Caco-2 (cell line): ENCODE measurements at regions of chr5 and their contacts with region 1.

Region 1: DNA sequence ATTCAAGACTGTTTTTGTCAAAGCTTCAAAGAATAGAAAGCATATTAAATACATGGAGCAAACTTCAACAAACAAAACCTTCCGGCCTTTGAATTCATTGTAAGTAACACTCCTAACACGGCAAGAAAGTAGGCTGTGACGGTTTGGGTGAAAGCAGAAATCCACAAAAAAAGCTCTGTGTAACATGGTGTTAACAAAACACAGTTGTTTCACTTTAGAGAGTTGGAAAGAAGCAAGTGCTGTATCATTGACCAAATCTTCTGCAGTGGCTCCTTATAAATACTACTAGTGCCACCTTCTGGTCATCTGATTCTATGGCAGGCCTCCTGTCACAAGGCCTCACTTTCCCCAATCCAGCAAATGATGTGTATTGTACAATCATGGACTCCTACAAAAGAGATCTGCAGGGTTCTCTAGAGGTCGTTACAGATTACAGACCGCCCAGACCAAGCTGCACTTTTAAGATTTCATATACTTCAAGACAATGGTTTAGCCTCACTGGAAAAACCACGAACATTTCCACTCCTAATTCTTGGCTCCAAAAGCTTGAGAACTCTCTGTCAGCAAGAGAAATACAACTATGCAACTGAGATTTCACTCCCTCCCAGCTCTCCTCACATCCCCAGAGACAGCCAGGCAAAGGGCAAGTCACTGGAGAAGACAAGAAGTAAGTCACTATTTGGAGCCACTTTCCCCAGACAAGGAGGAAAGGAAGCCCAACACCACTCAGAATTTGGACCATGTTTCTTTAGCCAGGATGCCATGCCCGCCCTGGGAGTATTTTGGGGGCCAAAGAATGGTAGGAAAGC is 196.2 kb downstream of the DTWD2 start:
- DNase-seq: peak; percentile 44 to 55
- H3K4me3 ChIP-seq: no peak overlapping the region
- H3K4me3 Mint-ChIP-seq: no peak overlapping the region
- H3K27ac Mint-ChIP-seq: no peak overlapping the region
- H3K4me1 ChIP-seq: no peaks in the 10 kb centered on the region
- H3K4me1 Mint-ChIP-seq: no peaks in the 10 kb centered on the region
- H3K27me3 ChIP-seq: no peaks in the 10 kb centered on the region
- H3K27me3 Mint-ChIP-seq: peaks cover 7% of the 10 kb centered on the region
- CTCF ChIP-seq: peak; percentile 80 to 83

Region 2: DNA sequence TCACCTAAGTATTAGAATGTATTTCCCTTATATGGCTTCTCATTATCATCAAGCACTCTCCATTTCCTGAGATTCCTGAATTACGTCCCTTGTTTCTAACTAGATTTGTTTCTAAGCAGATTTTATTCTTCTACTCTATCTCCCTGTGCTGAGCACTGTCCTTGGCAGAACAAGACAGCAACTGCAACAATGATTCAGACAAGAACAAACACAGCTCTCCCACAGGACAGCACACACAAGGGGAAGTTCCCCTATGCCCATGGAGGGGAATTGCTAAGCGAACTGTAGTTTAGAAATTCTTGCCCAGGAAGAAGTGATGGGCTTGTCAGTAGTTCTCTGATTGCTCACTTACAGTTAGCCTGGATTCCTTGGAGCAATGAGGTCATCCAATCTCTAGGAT is 563.6 kb before region 1 on chr5:
- CTCF ChIA-PET with region 1: no interaction called
- POLR2A ChIA-PET with region 1: no interaction called
- intact Hi-C with region 1: loop called (anchors 5 kb)
- DNase-seq: no peak
- H3K4me3 ChIP-seq: no peak overlapping the region
- H3K4me3 Mint-ChIP-seq: no peak overlapping the region
- H3K27ac Mint-ChIP-seq: no peak overlapping the region
- H3K4me1 ChIP-seq: no peaks in the 10 kb centered on the region
- H3K4me1 Mint-ChIP-seq: no peaks in the 10 kb centered on the region
- H3K27me3 ChIP-seq: no peaks in the 10 kb centered on the region
- H3K27me3 Mint-ChIP-seq: peaks cover 8% of the 10 kb centered on the region
- CTCF ChIP-seq: no peak

Region 3: DNA sequence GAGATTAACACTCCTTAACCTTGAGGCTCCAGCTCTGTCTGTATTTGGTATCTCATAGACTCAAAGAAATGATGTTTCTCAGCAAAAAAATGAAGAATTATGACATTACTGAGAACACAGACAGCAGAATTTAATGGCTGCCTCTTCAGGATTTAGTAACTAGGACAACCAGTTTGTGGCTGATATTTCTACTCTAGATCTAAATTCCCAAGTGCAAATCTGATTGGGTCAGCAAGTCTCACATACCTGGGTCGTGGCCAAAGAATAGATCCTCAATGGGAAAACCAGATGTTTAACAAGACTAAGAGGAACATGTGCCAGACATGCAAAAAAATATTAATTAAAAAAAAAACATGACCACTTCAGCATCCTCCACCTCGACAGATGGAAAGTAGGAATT is 412.7 kb before region 1 on chr5:
- CTCF ChIA-PET with region 1: no interaction called
- POLR2A ChIA-PET with region 1: no interaction called
- intact Hi-C with region 1: loop called (anchors 1 kb)
- DNase-seq: no peak
- H3K4me3 ChIP-seq: no peak overlapping the region
- H3K4me3 Mint-ChIP-seq: no peak overlapping the region
- H3K27ac Mint-ChIP-seq: no peak overlapping the region
- H3K4me1 ChIP-seq: peaks cover 8% of the 10 kb centered on the region; the same call in 1 of the 2 replicates
- H3K4me1 Mint-ChIP-seq: no peaks in the 10 kb centered on the region
- H3K27me3 ChIP-seq: no peaks in the 10 kb centered on the region
- H3K27me3 Mint-ChIP-seq: no peaks in the 10 kb centered on the region
- CTCF ChIP-seq: no peak

Region 4: GRCh38 chr5:118506217-118506852 is 285.8 kb before region 1 on chr5:
- CTCF ChIA-PET with region 1: no interaction called
- POLR2A ChIA-PET with region 1: no interaction called
- intact Hi-C with region 1: loop called (anchors 5 kb)
- DNase-seq: no peak
- H3K4me3 ChIP-seq: no peak overlapping the region
- H3K4me3 Mint-ChIP-seq: no peak overlapping the region
- H3K27ac Mint-ChIP-seq: no peak overlapping the region
- H3K4me1 ChIP-seq: no peaks in the 10 kb centered on the region
- H3K4me1 Mint-ChIP-seq: no peaks in the 10 kb centered on the region
- H3K27me3 ChIP-seq: no peaks in the 10 kb centered on the region
- H3K27me3 Mint-ChIP-seq: no peaks in the 10 kb centered on the region
- CTCF ChIP-seq: no peak

Region 5: DNA sequence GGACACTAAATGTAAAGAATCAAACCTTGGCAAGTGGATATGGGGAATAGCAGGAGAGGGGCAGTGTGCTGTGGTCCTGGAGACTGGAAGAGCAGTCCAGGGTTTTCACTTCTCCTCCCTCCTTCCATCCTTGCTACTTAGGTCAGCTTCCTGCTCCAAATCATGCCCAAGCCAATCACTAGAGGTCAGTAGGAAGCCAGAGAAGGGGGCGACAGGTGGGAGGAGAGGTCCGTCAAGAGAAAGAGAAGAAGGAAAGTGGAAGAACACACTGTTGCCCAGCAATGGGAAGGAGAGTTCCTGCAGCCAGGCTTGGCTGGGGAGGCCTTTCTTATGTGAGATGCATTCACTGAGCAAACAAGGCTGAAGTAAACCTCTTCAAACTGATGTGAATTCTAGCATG is 93.4 kb before region 1 on chr5:
- CTCF ChIA-PET with region 1: no interaction called
- POLR2A ChIA-PET with region 1: no interaction called
- intact Hi-C with region 1: loop called (anchors 1 kb)
- DNase-seq: peak in 1 of 2 experiments; percentile 19
- H3K4me3 ChIP-seq: no peak overlapping the region
- H3K4me3 Mint-ChIP-seq: no peak overlapping the region
- H3K27ac Mint-ChIP-seq: no peak overlapping the region
- H3K4me1 ChIP-seq: no peaks in the 10 kb centered on the region
- H3K4me1 Mint-ChIP-seq: no peaks in the 10 kb centered on the region
- H3K27me3 ChIP-seq: no peaks in the 10 kb centered on the region
- H3K27me3 Mint-ChIP-seq: peaks cover 2% of the 10 kb centered on the region
- CTCF ChIP-seq: peak in 1 of 2 experiments; percentile 26

Region 6: DNA sequence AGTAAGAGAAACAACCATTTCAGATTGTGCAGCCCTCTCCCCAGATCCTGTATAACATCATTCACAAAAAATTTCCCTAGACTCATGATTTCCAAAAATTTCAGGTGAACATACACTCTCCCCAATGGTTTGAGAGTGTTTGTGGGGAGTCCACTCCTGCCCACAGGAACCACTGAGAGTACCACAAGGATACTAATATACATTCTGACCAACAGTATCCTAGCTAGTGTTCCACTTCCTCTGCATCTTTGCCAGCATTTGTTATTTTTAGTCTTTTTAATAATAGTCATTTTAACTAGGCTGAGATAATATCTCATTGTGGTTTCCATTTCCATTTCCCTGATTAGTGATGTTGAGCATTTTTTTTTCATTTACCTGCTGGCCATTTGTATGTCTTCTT is 40.8 kb after region 1 on chr5:
- CTCF ChIA-PET with region 1: no interaction called
- POLR2A ChIA-PET with region 1: no interaction called
- intact Hi-C with region 1: no loop called
- DNase-seq: no peak
- H3K4me3 ChIP-seq: no peak overlapping the region
- H3K4me3 Mint-ChIP-seq: no peak overlapping the region
- H3K27ac Mint-ChIP-seq: no peak overlapping the region
- H3K4me1 ChIP-seq: no peaks in the 10 kb centered on the region
- H3K4me1 Mint-ChIP-seq: no peaks in the 10 kb centered on the region
- H3K27me3 ChIP-seq: no peaks in the 10 kb centered on the region
- H3K27me3 Mint-ChIP-seq: peaks cover 3% of the 10 kb centered on the region
- CTCF ChIP-seq: no peak